Endothelial cell of umbilical vein (primary cell): ENCODE measurements at regions of chr7 and their contacts with region 1.

Region 1: DNA sequence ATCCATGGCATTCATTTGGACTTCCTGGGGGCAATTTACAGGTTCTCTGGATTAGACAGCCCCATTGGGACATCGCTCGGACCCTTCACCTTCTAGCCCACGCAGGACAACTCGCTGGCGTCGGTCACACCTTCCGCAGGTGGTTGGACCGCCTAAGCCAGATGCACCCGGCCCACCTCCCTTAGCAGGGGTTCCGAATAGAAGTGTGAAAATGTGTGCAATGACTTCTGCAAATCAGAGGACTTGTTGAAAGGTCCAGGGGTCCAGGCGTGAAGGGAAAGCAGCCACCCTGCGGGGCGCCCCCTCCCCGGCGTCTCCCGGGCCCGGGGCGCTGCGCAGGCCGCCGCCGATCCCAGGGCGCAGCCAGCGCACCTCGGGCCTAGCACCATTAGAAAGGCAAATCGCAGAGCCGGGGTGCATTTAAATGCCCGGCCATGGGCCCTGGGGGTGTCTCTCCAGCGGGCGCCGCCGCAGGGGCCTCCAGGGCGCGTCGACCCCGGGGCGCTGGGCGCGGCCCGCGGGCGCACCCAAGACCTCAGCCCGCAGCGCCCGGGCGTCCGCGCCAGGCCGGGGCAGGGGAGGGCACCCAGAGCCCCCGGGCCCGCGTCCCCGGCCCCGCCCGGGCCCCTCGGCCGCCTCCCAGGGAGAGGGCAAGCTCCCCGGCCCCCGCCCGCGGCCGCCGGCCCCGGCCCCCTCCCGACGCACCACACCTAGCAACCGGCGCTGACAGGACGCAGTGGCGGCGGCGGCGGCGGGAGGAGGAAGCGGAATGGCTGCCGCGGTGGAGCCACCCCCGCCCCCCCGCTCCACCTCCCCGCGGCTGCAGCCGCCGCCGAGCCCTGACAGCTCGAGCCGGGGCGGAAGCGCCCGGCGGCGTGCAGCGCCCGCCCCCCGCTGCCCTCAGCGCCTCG is 1.2 kb downstream of the JAZF1 start:
- DNase-seq: peak; percentile 21
- H3K4me3 ChIP-seq: peak overlapping the region; percentile 61 to 97 (median 67)
- H3K27ac ChIP-seq: peak overlapping the region; percentile 13
- H3K4me1 ChIP-seq: peaks cover 12% of the 10 kb centered on the region
- H3K27me3 ChIP-seq: no peaks in the 10 kb centered on the region
- CTCF ChIP-seq: no peak
- POLR2A ChIP-seq: no peak

Region 2: GRCh38 chr7:28151965-28152364 is 27.4 kb before region 1 on chr7:
- CTCF ChIA-PET with region 1: interaction called, 3 read pairs
- POLR2A ChIA-PET with region 1: no interaction called
- dilution Hi-C with region 1: no loop called
- intact Hi-C with region 1: loop called (anchors 2 kb)
- DNase-seq: peak; percentile 78
- H3K4me3 ChIP-seq: peak overlapping the region in 1 of 3 experiments; percentile 26
- H3K27ac ChIP-seq: peak overlapping the region; percentile 89
- H3K4me1 ChIP-seq: peaks cover 30% of the 10 kb centered on the region
- H3K27me3 ChIP-seq: no peaks in the 10 kb centered on the region
- CTCF ChIP-seq: no peak
- POLR2A ChIP-seq: no peak

Region 3: DNA sequence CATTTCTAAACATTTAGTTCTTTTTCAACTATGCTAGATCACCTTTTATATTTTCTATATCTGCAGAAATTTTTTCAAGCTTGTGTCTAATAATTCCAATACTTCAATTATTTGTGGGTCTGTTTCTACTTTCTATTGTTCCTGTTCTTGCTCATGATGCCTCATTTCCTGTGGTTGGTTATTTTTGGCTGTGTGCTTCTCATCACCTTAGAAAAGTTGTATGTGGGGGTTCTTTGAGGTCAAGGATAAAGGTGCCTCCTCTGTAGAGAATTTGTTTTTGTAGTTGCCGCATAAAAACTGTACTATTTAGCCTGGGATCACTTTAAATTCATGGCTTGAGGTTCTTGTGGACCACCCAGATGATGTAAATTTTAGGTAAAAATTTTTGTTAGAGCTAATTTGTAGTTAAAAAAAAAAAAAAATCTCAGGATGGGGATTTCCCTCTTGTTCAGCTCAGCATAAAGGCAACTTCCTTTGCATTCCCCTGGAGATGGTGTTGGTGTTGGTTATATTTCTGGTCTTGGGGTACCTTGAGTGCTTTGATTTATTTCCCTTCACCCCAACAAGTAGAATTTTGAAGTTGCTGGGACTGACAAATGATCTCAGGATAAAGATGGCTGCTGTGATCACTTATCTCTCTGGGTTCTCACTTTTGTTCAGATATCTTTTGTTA is 28.2 kb after region 1 on chr7:
- CTCF ChIA-PET with region 1: interaction called, 3 read pairs
- POLR2A ChIA-PET with region 1: no interaction called
- dilution Hi-C with region 1: no loop called
- intact Hi-C with region 1: loop called (anchors 2 kb)
- DNase-seq: peak; percentile 78
- H3K4me3 ChIP-seq: no peak overlapping the region
- H3K27ac ChIP-seq: peak overlapping the region; percentile 28
- H3K4me1 ChIP-seq: peaks cover 19% of the 10 kb centered on the region
- H3K27me3 ChIP-seq: no peaks in the 10 kb centered on the region
- CTCF ChIP-seq: no peak
- POLR2A ChIP-seq: no peak